ENCODE measurements at regions of chr17 and their contacts with region 1.

Region 1: DNA sequence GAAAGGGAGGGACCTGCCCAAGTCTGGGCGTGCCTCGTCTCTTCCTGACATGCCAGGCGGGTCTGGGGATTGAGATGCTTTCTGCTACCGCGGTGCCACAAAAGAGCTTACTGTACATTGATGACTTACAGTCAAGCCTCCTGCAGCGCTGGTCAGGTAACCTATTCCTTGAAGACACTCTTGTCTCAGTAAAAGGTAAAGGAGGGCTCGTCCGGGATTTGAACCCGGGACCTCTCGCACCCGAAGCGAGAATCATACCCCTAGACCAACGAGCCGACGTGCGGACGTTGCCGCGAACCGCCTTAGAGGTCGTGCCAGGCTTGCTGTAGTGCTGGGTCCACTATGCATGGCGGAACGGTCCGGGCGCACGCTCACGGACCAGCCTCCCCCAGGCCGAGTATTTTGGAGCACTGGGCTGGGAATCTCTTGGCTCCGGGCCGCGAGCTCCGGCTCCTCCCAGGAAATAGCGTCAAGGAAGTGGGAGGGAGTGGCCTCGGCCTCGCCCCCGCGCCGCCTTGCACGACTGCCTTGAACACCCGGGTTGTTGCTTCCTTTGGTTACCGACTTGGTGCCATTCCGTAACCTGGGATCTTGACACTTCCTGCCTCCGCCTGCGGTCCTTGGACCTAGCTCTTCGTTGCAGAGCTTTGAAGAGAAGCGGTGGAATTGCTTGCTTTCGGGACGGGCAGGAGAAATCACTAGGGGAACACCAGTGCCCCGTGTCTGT is 12.4 kb upstream of the AURKB start:
- DNase-seq: peak; percentile 80 to 92 (median 87)
- H3K4me3 ChIP-seq: peak overlapping the region; percentile 98
- H3K4me3 Mint-ChIP-seq: peak overlapping the region; percentile 86 to 98 (median 97)
- H3K27ac ChIP-seq: peak overlapping the region; percentile 86
- H3K27ac Mint-ChIP-seq: peak overlapping the region; percentile 94 to 100 (median 96)
- H3K4me1 ChIP-seq: peaks cover 41% of the 10 kb centered on the region
- H3K4me1 Mint-ChIP-seq: peaks cover 64 to 83% (median 79%) of the 10 kb centered on the region in 3 donors
- H3K27me3 ChIP-seq: no peaks in the 10 kb centered on the region
- H3K27me3 Mint-ChIP-seq: peaks cover 0 to 31% of the 10 kb centered on the region in 2 donors

Region 2: GRCh38 chr17:8156246-8156992 is 66.4 kb before region 1 on chr17:
- CTCF ChIA-PET with region 1: interaction called, 16 read pairs
- POLR2A ChIA-PET with region 1: interaction called, 37 read pairs
- DNase-seq: peak; percentile 100
- H3K4me3 ChIP-seq: peak overlapping the region; percentile 100
- H3K4me3 Mint-ChIP-seq: no peak overlapping the region
- H3K27ac ChIP-seq: peak overlapping the region; percentile 100
- H3K27ac Mint-ChIP-seq: no peak overlapping the region
- H3K4me1 ChIP-seq: peaks cover 77% of the 10 kb centered on the region
- H3K4me1 Mint-ChIP-seq: peaks cover 32 to 73% (median 48%) of the 10 kb centered on the region in 3 donors
- H3K27me3 ChIP-seq: no peaks in the 10 kb centered on the region
- H3K27me3 Mint-ChIP-seq: peaks cover 0 to 14% of the 10 kb centered on the region in 2 donors

Region 3: DNA sequence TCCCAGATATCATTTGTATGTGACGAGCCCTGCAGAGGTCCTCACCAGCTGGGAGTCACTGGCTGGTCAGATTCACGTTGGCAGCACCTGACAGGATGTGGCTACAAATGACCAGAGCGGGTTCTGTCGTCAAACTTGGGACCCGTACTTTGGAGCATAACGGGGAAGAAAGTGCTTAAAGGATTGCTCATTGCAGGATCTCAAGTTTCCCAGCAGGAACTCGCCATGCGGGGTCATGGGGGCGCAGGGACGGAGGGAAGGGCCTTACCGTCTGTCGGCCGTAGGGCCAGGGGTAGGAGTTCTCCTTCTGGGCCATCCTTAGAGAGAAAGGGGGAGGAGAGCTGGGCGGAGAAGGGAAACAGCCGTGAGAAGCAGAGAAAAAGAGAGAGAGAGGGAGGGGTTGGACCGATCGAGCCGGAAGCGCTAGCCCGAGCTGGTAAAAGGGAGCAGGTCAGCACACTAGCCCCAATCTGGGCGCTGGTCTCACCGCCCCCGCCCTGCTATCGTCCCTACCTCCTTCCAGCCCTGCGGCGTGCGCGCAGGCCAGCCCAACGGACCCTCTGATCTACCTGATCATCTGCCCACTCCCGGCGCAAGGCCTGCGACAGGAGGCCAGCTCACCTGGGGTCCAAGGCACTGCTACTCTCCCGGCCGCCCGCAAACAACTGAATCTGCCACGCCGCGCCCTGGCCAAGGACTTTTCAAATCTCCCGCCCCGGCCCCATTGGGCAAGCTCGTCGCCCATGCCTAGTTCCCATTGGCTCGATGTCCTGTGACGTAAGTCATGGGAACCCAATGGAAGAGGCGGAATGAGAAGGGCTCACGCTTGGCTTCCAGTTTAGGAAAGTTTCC is 12.7 kb before region 1 on chr17 and contains the start of gene AURKB:
- CTCF ChIA-PET with region 1: interaction called, 10 read pairs
- POLR2A ChIA-PET with region 1: interaction called, 24 read pairs
- DNase-seq: peak; percentile 86 to 96 (median 92)
- H3K4me3 ChIP-seq: peak within 1 kb of the TSS; percentile 93
- H3K4me3 Mint-ChIP-seq: peak within 1 kb of the TSS; percentile 83 to 96 (median 89)
- H3K27ac ChIP-seq: peak within 1 kb of the TSS; percentile 61
- H3K27ac Mint-ChIP-seq: peak within 1 kb of the TSS; percentile 53 to 95 (median 92)
- H3K4me1 ChIP-seq: peaks cover 12% of the 10 kb centered on the region
- H3K4me1 Mint-ChIP-seq: peaks cover 15 to 22% (median 17%) of the 10 kb centered on the region in 3 donors
- H3K27me3 ChIP-seq: no peaks in the 10 kb centered on the region
- H3K27me3 Mint-ChIP-seq: peaks cover 0 to 3% of the 10 kb centered on the region in 2 donors
- total RNA-seq, gene AURKB: 88.1 to 94.4 TPM

Region 4: GRCh38 chr17:8288336-8289102 is 65.7 kb after region 1 on chr17 and contains the start of gene RANGRF:
- CTCF ChIA-PET with region 1: interaction called, 18 read pairs
- POLR2A ChIA-PET with region 1: interaction called, 11 read pairs
- DNase-seq: peak; percentile 72 to 86 (median 79)
- H3K4me3 ChIP-seq: peak within 1 kb of the TSS; percentile 92
- H3K4me3 Mint-ChIP-seq: peak within 1 kb of the TSS; percentile 94 to 98 (median 97)
- H3K27ac ChIP-seq: peak within 1 kb of the TSS; percentile 86
- H3K27ac Mint-ChIP-seq: peak within 1 kb of the TSS; percentile 91 to 99 (median 96)
- H3K4me1 ChIP-seq: peaks cover 17% of the 10 kb centered on the region
- H3K4me1 Mint-ChIP-seq: peaks cover 43 to 61% (median 50%) of the 10 kb centered on the region in 3 donors
- H3K27me3 ChIP-seq: no peaks in the 10 kb centered on the region
- H3K27me3 Mint-ChIP-seq: no peaks in the 10 kb centered on the region
- total RNA-seq, gene RANGRF: 66.2 to 71.1 TPM

Region 5: GRCh38 chr17:8300627-8301242 is 77.9 kb after region 1 on chr17:
- CTCF ChIA-PET with region 1: interaction called, 21 read pairs
- POLR2A ChIA-PET with region 1: interaction called, 19 read pairs
- DNase-seq: peak; percentile 43 to 79 (median 66)
- H3K4me3 ChIP-seq: no peak overlapping the region
- H3K4me3 Mint-ChIP-seq: peak overlapping the region in 1 of 7 donors; percentile 31
- H3K27ac ChIP-seq: no peak overlapping the region
- H3K27ac Mint-ChIP-seq: peak overlapping the region in 6 of 8 donors; percentile 4 to 86 (median 24)
- H3K4me1 ChIP-seq: peaks cover 10% of the 10 kb centered on the region
- H3K4me1 Mint-ChIP-seq: peaks cover 9 to 12% (median 11%) of the 10 kb centered on the region in 3 donors
- H3K27me3 ChIP-seq: no peaks in the 10 kb centered on the region
- H3K27me3 Mint-ChIP-seq: no peaks in the 10 kb centered on the region